ENCODE measurements at regions of chr1 and their contacts with region 1.

Region 1: GRCh38 chr1:64923294-64923721 is 43.0 kb downstream of the JAK1 start:
- DNase-seq: peak; percentile 64
- ATAC-seq: peak; percentile 68
- H3K4me3 Mint-ChIP-seq: peak overlapping the region; percentile 46
- H3K27ac Mint-ChIP-seq: peak overlapping the region; percentile 88
- H3K4me1 Mint-ChIP-seq: peaks cover 95% of the 10 kb centered on the region
- H3K27me3 Mint-ChIP-seq: no peaks in the 10 kb centered on the region

Region 2: GRCh38 chr1:64811131-64811530 is 112.2 kb before region 1 on chr1:
- CTCF ChIA-PET with region 1: no interaction called
- POLR2A ChIA-PET with region 1: no interaction called
- intact Hi-C with region 1: no loop called
- DNase-seq: no peak
- ATAC-seq: no peak
- H3K4me3 Mint-ChIP-seq: no peak overlapping the region
- H3K27ac Mint-ChIP-seq: no peak overlapping the region
- H3K4me1 Mint-ChIP-seq: no peaks in the 10 kb centered on the region
- H3K27me3 Mint-ChIP-seq: no peaks in the 10 kb centered on the region

Region 3: GRCh38 chr1:64877151-64877550 is 46.2 kb before region 1 on chr1:
- CTCF ChIA-PET with region 1: no interaction called
- POLR2A ChIA-PET with region 1: no interaction called
- intact Hi-C with region 1: loop called (anchors 1 to 2 kb)
- DNase-seq: peak; percentile 43
- ATAC-seq: peak; percentile 88
- H3K4me3 Mint-ChIP-seq: peak overlapping the region; percentile 4
- H3K27ac Mint-ChIP-seq: peak overlapping the region; percentile 35
- H3K4me1 Mint-ChIP-seq: peaks cover 60% of the 10 kb centered on the region
- H3K27me3 Mint-ChIP-seq: no peaks in the 10 kb centered on the region

Region 4: GRCh38 chr1:64906447-64906846 is 16.9 kb before region 1 on chr1:
- CTCF ChIA-PET with region 1: interaction called, 10 read pairs
- POLR2A ChIA-PET with region 1: interaction called, 9 read pairs
- intact Hi-C with region 1: loop called in 1 of 2 experiments (anchors 2 kb)
- DNase-seq: peak; percentile 59
- ATAC-seq: peak; percentile 92
- H3K4me3 Mint-ChIP-seq: no peak overlapping the region
- H3K27ac Mint-ChIP-seq: peak overlapping the region; percentile 68
- H3K4me1 Mint-ChIP-seq: peaks cover 89% of the 10 kb centered on the region
- H3K27me3 Mint-ChIP-seq: no peaks in the 10 kb centered on the region

Region 5: GRCh38 chr1:64940025-64940424 is 16.7 kb after region 1 on chr1:
- CTCF ChIA-PET with region 1: interaction called, 3 read pairs
- POLR2A ChIA-PET with region 1: interaction called, 3 read pairs
- intact Hi-C with region 1: loop called in 1 of 2 experiments (anchors 2 kb)
- DNase-seq: no peak
- ATAC-seq: peak; percentile 81
- H3K4me3 Mint-ChIP-seq: no peak overlapping the region
- H3K27ac Mint-ChIP-seq: peak overlapping the region; percentile 5
- H3K4me1 Mint-ChIP-seq: peaks cover 73% of the 10 kb centered on the region
- H3K27me3 Mint-ChIP-seq: no peaks in the 10 kb centered on the region

Region 6: DNA sequence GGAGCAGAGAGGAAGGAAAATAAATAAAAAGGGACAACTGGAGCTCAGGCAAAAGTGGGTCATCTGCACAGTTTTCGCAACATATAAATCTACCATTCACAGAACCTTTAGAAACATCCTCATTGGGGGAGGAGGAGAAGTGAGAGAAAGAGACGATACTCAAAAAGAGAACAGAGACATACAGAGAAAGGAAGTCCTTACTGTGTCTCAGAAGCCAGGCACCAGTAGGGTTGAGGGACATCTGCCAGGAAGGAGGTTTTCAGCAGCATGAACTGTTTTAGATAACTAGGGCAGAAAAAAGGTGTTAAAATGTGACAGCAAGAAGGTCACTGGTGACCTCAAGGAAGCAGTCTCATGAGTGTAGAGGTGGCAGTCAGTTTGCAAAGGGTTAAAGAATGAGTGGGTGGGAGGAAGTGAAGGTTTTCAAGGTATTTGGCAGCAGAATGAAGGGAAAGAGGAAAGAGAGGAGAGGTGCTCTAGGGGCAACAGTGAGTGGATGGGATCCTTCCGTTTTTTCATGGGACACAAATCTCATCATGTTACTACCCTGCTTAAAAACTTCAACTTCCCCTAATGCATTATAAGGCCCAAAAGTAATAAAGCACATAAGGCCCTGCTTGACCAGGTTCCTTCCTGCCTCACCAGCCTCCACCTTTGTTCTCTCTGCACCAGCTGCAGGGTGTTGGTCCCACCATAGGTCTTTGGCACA is 33.6 kb after region 1 on chr1:
- CTCF ChIA-PET with region 1: interaction called, 32 read pairs
- POLR2A ChIA-PET with region 1: interaction called, 13 read pairs
- intact Hi-C with region 1: loop called (anchors 1 kb)
- DNase-seq: peak; percentile 75
- ATAC-seq: peak; percentile 87
- H3K4me3 Mint-ChIP-seq: no peak overlapping the region
- H3K27ac Mint-ChIP-seq: no peak overlapping the region
- H3K4me1 Mint-ChIP-seq: peaks cover 61% of the 10 kb centered on the region
- H3K27me3 Mint-ChIP-seq: no peaks in the 10 kb centered on the region

Region 7: DNA sequence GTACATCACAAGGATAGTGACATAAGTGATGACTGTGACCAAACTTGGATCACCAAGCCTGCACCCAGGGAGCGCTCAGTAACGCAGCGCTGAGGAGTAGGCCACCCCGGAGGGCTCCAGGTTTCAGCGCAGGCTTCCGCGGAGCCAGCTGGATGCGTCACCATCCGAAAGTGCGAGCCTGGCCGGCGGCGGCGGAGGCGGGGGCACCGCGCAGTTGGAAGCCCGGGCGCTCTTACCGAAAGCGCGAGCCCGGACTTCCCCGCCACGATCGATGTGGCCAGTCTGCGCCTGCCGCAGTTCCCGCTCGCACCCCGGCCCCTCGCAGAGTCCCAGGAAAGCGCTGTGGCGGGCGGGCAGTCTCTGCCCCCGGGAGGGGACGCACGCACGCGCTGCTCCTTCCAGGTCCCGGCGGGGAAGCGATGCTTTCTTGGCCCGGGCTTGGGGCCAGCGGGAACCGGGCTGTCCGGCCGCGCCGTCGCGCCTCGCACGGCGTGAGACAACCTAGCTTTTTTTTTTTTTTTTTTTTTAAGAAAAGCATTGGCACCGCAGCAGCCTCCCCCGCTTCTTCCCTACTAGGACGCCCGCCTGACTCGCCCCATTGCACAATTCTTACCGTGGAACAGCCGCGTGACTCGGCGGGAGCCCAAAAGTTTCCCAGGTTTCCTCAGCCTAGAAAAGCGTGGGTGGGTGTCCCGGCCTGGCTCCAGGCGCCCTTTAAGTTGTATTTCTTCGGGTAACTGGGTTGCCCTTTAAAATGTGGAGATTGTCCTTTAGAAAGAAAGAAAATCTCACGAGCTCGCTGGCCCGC is 79.4 kb after region 1 on chr1:
- CTCF ChIA-PET with region 1: no interaction called
- POLR2A ChIA-PET with region 1: no interaction called
- intact Hi-C with region 1: loop called (anchors 1 to 2 kb)
- DNase-seq: peak; percentile 86
- ATAC-seq: peak; percentile 85
- H3K4me3 Mint-ChIP-seq: peak overlapping the region; percentile 70
- H3K27ac Mint-ChIP-seq: peak overlapping the region; percentile 87
- H3K4me1 Mint-ChIP-seq: peaks cover 28% of the 10 kb centered on the region
- H3K27me3 Mint-ChIP-seq: no peaks in the 10 kb centered on the region

Region 8: DNA sequence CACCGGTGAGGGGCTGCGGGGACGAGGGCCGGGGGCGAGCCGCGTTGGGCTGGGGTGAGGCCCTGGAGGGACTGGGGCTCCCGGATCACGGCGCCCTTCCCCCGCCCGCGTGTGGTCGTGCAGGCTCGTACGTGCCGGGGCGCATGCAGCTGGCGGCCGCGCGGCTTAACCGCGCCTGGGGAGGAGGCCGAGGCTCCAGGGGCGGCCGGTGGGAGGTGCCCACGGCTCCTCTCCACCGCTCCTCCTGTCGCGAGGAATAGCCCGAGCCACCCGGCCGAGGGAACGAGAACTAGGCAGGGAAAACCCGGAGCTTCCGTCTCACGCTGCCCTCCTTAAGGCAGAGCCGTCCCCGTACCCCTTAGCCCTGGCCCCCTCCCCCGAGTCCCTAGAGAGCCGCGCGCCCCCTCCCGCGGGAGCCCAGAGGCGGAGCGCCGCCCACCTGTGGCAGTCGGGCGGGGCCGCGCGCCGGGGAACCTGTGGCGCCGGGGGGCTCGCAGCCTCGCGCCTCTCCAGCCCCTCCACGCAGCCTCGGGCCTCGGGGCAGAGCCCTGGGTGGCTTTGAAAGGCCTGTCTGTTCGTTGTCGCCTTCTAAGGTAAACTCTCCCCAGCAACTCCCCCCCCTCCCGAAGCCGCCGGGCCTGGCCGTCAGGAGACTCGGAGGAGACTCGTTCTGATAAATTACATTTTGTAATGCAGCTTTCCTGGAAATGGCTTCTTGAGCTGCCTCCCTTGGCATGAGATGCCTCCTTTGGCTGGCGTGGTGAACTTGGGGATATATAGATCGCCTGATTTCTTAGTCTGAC is 225.4 kb after region 1 on chr1:
- CTCF ChIA-PET with region 1: no interaction called
- POLR2A ChIA-PET with region 1: no interaction called
- intact Hi-C with region 1: loop called in 1 of 2 experiments (anchors 10 kb)
- DNase-seq: peak; percentile 88
- ATAC-seq: peak; percentile 78
- H3K4me3 Mint-ChIP-seq: peak overlapping the region; percentile 85
- H3K27ac Mint-ChIP-seq: peak overlapping the region; percentile 82
- H3K4me1 Mint-ChIP-seq: peaks cover 15% of the 10 kb centered on the region
- H3K27me3 Mint-ChIP-seq: peaks cover 43% of the 10 kb centered on the region

Measured in activated CD4-positive, alpha-beta T cell treated with anti-CD3 and anti-CD28 coated beads for 36 hours (primary cell).